Left ventricle myocardium superior (tissue), 1 donor: ENCODE measurements at regions of chr10 and their contacts with region 1.

Region 1: DNA sequence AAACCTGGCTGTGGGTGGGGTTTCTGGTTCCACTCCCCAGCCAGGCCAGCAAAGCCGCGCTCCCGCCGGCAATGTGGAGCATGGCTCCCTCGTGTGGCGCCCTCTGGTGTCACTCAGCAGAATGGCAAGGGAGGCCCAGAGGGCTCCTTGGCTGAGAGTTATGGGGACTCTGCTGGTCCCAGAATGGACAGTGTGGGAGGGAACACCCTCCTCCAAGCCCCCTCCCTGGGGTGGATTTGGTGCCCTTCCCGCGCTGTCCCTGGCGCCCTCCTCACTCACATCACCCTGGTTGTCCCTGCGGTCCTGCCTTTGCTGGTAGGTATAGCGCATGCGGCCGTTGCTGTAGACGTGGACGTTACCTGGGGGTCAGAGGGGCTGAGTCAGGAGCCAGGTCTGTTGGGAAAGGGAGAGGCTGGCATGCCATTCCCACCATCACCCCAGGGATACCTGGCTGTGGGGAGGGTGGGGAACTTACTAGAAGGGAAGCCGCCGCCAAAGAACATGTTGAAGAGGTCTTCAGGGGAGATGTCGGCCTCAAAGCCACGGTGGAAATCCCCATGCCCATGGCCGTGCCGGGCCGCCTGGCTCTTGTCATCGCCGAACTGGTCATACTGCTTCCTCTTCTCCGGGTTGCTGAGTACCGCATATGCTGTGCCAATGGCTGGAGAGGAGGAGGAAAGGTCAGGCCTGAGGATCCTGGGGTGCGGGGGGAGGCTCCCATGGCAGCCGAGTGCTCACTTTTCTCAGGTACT is 14.0 kb downstream of the DNAJB12 start:
- DNase-seq: peak; percentile 83
- ATAC-seq: peak; percentile 16

Region 2: GRCh38 chr10:71638064-71638821 is 702.4 kb before region 1 on chr10:
- intact Hi-C with region 1: no loop called
- DNase-seq: no peak
- ATAC-seq: peak; percentile 50

Region 3: DNA sequence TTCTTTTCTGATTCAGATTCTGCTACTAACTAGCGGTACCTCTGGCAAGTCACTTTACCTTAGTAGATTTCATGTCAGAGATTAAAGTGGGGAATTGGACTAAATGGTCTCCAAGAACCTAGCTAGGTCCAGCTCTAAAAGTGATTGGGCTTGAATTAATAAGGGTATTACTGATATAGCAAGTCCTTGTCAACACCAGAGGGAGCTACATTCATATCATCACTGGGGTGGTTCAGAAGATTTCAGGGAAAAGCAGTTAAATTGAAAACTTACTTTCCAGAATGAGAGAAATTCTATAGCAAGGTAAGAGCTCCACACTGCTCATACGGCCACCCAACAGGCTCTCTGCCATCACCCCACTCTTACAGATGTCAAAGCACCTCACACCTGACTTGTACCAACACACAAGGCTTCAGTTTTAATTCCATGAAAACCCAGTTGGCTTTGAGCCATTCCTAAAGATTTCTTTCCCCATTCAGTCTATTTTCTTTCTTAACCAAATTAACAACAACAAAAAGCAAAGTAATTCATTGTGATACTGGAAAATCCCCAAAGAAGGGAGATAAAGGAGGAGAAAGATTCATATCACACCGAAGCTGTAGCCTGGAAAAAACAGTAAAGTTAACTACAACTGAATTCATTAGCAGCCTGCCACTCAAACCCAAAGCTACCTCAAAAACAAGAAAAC is 214.4 kb before region 1 on chr10:
- intact Hi-C with region 1: loop called (anchors 5 kb)
- DNase-seq: no peak
- ATAC-seq: peak; percentile 36

Region 4: DNA sequence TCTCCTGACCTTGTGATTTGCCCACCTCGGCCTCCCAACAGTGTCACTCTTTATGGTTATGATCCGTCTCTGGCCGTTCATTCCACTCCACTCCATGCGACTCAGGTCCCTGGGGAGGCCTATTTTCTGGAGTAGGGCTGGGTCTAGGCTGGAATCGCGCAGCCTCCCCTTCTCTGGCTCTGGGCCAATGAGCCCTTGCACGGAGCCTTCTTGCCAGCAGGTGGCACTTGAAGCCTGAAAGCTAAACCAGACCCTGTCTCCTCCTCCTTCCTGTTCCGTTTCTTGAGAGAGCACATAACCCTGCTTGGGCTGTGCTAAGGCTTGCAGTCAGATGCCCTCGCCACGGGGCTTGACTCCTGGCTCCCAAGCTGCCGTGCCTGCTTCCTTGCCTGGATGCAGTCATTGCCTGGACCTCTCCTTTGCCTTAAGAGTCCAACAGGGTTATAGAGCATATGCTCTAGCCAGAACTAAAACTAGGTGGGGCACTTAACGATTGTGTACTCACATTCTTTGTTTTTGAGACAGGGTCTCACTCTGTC is 23.6 kb after region 1 on chr10:
- intact Hi-C with region 1: no loop called
- DNase-seq: peak; percentile 91
- ATAC-seq: peak; percentile 96

Region 5: DNA sequence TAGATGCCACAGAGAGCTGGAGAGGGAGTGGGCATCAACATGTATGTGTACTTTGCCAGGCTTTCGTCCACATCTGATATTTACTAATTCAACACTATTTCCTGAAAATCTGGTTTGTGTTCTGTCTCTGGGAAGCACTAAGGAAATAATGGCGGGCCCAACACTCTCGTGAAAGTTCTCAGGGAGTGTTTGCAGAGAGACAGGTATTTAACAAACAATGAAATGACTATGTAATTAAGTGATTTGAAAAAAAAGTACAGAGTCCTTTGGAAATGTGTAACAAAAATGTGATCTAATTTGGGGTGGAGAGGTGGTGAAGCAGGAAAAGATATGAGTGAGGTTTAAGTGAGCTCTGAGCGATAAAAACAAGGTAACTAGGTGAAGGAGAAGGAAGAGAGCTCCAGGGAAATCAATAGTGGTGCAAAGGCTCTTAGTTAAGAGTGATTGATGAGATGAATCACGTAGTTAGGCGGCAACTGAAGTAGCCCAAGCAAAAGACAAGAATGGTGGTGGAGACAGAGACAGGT is 109.3 kb after region 1 on chr10:
- intact Hi-C with region 1: no loop called
- DNase-seq: no peak
- ATAC-seq: no peak